ENCODE measurements at regions of chr20 and their contacts with region 1.

Region 1: GRCh38 chr20:56247948-56248782 is at the start of gene MC3R:
- DNase-seq: peak; percentile 66
- ATAC-seq: peak; percentile 67
- H3K4me3 Mint-ChIP-seq: no peak within 1 kb of the TSS
- H3K27ac Mint-ChIP-seq: no peak within 1 kb of the TSS
- H3K4me1 Mint-ChIP-seq: no peaks in the 10 kb centered on the region
- H3K27me3 Mint-ChIP-seq: peaks cover 8% of the 10 kb centered on the region
- total RNA-seq, gene MC3R: not detected

Region 2: GRCh38 chr20:56343861-56344381 is 95.8 kb after region 1 on chr20:
- CTCF ChIA-PET with region 1: interaction called, 13 read pairs
- DNase-seq: peak; percentile 55
- ATAC-seq: peak; percentile 76
- H3K4me3 Mint-ChIP-seq: no peak overlapping the region
- H3K27ac Mint-ChIP-seq: no peak overlapping the region
- H3K4me1 Mint-ChIP-seq: peaks cover 2% of the 10 kb centered on the region
- H3K27me3 Mint-ChIP-seq: peaks cover 67% of the 10 kb centered on the region

Region 3: GRCh38 chr20:56392282-56393137 is 144.3 kb after region 1 on chr20 and contains the start of gene CSTF1:
- CTCF ChIA-PET with region 1: no interaction called
- DNase-seq: peak; percentile 99
- ATAC-seq: peak; percentile 90
- H3K4me3 Mint-ChIP-seq: no peak within 1 kb of the TSS
- H3K27ac Mint-ChIP-seq: no peak within 1 kb of the TSS
- H3K4me1 Mint-ChIP-seq: peaks cover 58% of the 10 kb centered on the region
- H3K27me3 Mint-ChIP-seq: no peaks in the 10 kb centered on the region
- total RNA-seq, gene CSTF1: 60.0 to 82.4 TPM